Activated CD4-positive, alpha-beta T cell treated with anti-CD3 and anti-CD28 coated beads for 36 hours (primary cell): ENCODE measurements at regions of chr7 and their contacts with region 1.

Region 1: GRCh38 chr7:65872776-65873581 is at the start of gene VKORC1L1:
- DNase-seq: peak; percentile 98
- ATAC-seq: peak; percentile 96
- H3K4me3 Mint-ChIP-seq: peak within 1 kb of the TSS; percentile 84
- H3K27ac Mint-ChIP-seq: peak within 1 kb of the TSS; percentile 75
- H3K4me1 Mint-ChIP-seq: peaks cover 7% of the 10 kb centered on the region
- H3K27me3 Mint-ChIP-seq: no peaks in the 10 kb centered on the region
- total RNA-seq, gene VKORC1L1: 16.5 to 17.6 TPM

Region 2: GRCh38 chr7:65037740-65038678 is 835.0 kb before region 1 on chr7:
- CTCF ChIA-PET with region 1: no interaction called
- POLR2A ChIA-PET with region 1: no interaction called
- intact Hi-C with region 1: loop called in 1 of 2 experiments (anchors 1 kb)
- DNase-seq: peak; percentile 97
- ATAC-seq: peak; percentile 93
- H3K4me3 Mint-ChIP-seq: peak overlapping the region; percentile 82
- H3K27ac Mint-ChIP-seq: no peak overlapping the region
- H3K4me1 Mint-ChIP-seq: peaks cover 13% of the 10 kb centered on the region
- H3K27me3 Mint-ChIP-seq: no peaks in the 10 kb centered on the region

Region 3: DNA sequence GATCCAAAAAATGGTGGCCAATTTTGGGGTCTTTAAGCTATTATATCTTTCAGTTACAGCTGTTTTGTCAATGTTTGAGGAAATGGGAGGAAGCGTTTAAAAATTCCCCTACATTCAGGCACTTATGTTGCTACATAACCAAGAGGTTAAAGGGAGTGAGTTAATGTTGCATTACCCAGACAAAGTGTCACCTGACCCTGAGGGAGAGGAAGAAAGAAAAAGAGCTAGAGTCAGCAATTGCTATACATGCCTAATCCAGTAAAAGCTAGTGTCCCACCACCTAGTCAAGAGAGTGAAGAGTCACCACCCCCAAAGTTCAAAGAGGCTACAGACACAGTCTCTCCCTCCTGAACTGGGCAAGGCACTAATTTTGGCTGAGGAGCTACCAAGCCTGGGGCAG is 568.8 kb before region 1 on chr7:
- CTCF ChIA-PET with region 1: no interaction called
- POLR2A ChIA-PET with region 1: no interaction called
- intact Hi-C with region 1: no loop called
- DNase-seq: no peak
- ATAC-seq: no peak
- H3K4me3 Mint-ChIP-seq: no peak overlapping the region
- H3K27ac Mint-ChIP-seq: no peak overlapping the region
- H3K4me1 Mint-ChIP-seq: no peaks in the 10 kb centered on the region
- H3K27me3 Mint-ChIP-seq: peaks cover 6% of the 10 kb centered on the region

Region 4: DNA sequence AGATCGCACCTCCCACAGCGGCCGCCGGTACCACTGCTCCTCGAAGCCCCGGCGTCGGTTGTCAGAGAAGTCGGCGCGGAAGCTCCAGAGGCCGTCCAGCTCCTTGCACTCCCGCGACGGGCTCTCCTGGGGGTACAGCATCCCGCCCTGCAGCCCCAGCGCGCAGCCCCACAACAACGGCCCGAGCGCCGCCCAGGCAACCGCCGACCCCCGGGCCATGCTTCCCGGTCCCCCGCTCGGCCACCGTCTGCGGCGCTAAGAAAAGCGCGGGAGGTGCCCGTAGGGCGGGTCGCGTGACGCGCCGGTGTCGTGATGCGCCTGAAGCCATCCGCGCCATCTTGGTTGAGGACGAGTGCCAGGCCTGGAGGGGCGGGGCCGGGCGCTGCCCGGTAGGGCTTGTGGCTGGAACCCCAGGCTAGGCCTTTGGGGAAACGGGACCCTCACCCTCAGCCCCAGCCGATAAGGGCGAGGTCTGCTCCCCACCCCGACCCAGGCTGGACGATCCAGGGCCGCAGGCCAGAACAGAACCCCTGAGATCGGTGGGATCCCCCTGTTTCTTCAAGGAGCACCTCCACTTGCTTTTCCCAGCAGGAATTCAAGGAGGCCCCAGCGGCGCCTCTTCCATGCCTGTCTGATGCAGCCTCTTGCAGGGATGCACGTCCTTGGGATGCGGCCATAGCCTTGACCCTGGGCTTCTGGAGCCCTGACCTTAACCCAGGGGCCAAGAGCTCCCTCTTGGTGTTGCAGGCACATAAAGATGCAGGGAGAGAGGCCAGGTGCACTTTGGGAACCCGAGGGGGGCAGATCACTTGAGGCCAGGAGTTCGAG is 109.2 kb after region 1 on chr7 and contains the start of gene GUSB:
- CTCF ChIA-PET with region 1: no interaction called
- POLR2A ChIA-PET with region 1: no interaction called
- intact Hi-C with region 1: loop called (anchors 1 to 5 kb)
- DNase-seq: peak; percentile 95
- ATAC-seq: peak; percentile 90
- H3K4me3 Mint-ChIP-seq: peak within 1 kb of the TSS; percentile 80
- H3K27ac Mint-ChIP-seq: peak within 1 kb of the TSS; percentile 90
- H3K4me1 Mint-ChIP-seq: peaks cover 8% of the 10 kb centered on the region
- H3K27me3 Mint-ChIP-seq: no peaks in the 10 kb centered on the region
- total RNA-seq, gene GUSB: 41.8 to 43.2 TPM

Region 5: DNA sequence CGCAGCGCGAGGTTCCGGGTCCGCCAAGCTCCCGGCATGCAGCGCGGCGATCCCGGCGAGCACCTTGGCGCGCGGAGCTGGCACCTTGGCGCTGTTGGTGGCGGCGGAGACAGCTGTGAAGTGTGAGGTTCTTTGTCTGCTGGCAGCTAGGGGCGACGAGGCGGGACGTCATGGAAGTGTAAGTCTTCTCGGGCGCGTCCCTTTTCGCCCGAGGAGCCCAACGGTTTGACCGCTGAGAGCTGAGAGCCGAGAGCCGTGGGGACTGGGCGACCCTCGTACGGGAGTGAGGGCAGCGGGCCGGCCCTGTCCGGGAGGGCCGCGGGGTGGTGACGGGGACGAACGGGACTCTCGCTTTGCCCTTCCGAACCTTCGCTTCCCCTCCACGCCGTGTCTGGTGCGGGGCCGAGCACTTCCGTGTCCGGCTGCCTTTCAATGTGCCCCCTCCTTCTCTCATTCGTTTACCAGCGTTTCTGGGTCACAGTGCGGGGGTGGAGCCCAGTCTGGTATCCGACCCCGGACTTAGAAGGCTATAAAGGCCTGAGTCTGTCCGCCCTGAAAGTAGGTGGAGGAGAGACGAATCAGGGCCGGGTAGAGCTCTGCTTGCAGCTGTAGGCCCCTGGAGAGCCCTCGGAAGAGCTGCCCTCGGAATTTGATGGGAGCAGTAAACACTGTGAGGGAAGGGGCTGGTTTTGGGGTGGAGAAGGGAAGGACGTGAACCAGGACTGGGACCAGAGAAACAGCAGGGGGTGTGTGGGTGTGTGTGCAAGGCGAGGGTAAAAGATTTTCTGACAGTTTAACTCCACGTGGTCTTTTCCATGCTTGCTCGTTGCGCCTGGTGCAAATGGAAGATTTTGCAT is 242.0 kb after region 1 on chr7 and contains the start of gene CRCP:
- CTCF ChIA-PET with region 1: no interaction called
- POLR2A ChIA-PET with region 1: no interaction called
- intact Hi-C with region 1: loop called in 1 of 2 experiments (anchors 1 kb)
- DNase-seq: peak; percentile 91
- ATAC-seq: peak; percentile 91
- H3K4me3 Mint-ChIP-seq: peak within 1 kb of the TSS; percentile 95
- H3K27ac Mint-ChIP-seq: peak within 1 kb of the TSS; percentile 98
- H3K4me1 Mint-ChIP-seq: peaks cover 39% of the 10 kb centered on the region
- H3K27me3 Mint-ChIP-seq: no peaks in the 10 kb centered on the region
- total RNA-seq, gene CRCP: 24.5 to 27.2 TPM

Region 6: GRCh38 chr7:66591799-66592596 is 719.0 kb after region 1 on chr7:
- CTCF ChIA-PET with region 1: no interaction called
- POLR2A ChIA-PET with region 1: no interaction called
- intact Hi-C with region 1: loop called in 1 of 2 experiments (anchors 1 kb)
- DNase-seq: peak; percentile 96
- ATAC-seq: peak; percentile 98
- H3K4me3 Mint-ChIP-seq: peak overlapping the region; percentile 94
- H3K27ac Mint-ChIP-seq: peak overlapping the region; percentile 98
- H3K4me1 Mint-ChIP-seq: peaks cover 46% of the 10 kb centered on the region
- H3K27me3 Mint-ChIP-seq: no peaks in the 10 kb centered on the region